Gastrocnemius medialis (tissue), 4 donors: ENCODE measurements at regions of chr17 and their contacts with region 1.

Region 1: DNA sequence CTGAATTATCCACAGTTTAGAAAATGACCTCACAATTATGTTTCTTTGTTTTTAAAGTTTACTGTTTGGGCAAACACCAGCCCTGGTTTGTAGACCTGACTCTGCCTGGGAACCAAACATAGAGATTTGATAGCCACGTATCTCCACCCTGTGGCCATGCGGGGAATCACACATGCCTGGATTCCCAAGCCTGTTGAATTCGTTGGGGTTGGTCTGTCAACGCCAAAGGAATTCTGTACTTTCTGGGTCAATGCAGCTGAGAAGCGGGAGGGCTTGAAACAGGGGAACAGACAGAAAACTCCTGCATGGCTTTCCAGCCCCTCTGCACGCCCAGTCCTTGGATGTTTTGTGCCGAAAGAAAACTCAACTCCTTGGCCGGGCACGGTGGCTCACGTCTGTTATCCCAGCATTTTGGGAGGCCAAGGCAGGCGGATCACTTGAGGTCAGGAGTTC is 27.0 kb downstream of the CD300A start:
- DNase-seq: peak; percentile 34 to 62
- ATAC-seq: peak; percentile 95 to 97
- H3K4me3 ChIP-seq: no peak overlapping the region
- H3K27ac ChIP-seq: no peak overlapping the region
- H3K4me1 ChIP-seq: peaks cover 4 to 12% of the 10 kb centered on the region in 2 donors
- H3K27me3 ChIP-seq: no peaks in the 10 kb centered on the region
- CTCF ChIP-seq: peak; percentile 84 to 92 (median 89)
- POLR2A ChIP-seq: no peak

Region 2: GRCh38 chr17:74203439-74204240 is 289.8 kb before region 1 on chr17 and contains the start of gene RPL38:
- in situ Hi-C with region 1: loop called in 1 of 4 experiments (anchors 25 kb)
- intact Hi-C with region 1: no loop called
- DNase-seq: peak; percentile 94 to 95
- ATAC-seq: peak; percentile 92 to 96
- H3K4me3 ChIP-seq: peak within 1 kb of the TSS; percentile 80 to 93 (median 87)
- H3K27ac ChIP-seq: peak within 1 kb of the TSS; percentile 87 to 89 (median 88)
- H3K4me1 ChIP-seq: peaks cover 28 to 40% of the 10 kb centered on the region in 2 donors
- H3K27me3 ChIP-seq: peaks cover 0 to 13% (median 0%) of the 10 kb centered on the region in 3 donors
- CTCF ChIP-seq: peak; percentile 93 to 98 (median 96)
- POLR2A ChIP-seq: peak; percentile 90 to 93
- total RNA-seq, gene RPL38: 346 to 472 (median 443) TPM

Region 3: GRCh38 chr17:74457146-74457819 is 36.1 kb before region 1 on chr17:
- in situ Hi-C with region 1: no loop called
- intact Hi-C with region 1: loop called (anchors 2 kb)
- DNase-seq: peak in 1 of 2 donors; percentile 78
- ATAC-seq: peak; percentile 24 to 28
- H3K4me3 ChIP-seq: peak overlapping the region in 2 of 4 donors; percentile 25 to 39
- H3K27ac ChIP-seq: peak overlapping the region; percentile 58 to 97 (median 69)
- H3K4me1 ChIP-seq: peaks cover 29 to 36% of the 10 kb centered on the region in 2 donors
- H3K27me3 ChIP-seq: no peaks in the 10 kb centered on the region
- CTCF ChIP-seq: peak; percentile 98 to 99 (median 98)
- POLR2A ChIP-seq: no peak

Region 4: DNA sequence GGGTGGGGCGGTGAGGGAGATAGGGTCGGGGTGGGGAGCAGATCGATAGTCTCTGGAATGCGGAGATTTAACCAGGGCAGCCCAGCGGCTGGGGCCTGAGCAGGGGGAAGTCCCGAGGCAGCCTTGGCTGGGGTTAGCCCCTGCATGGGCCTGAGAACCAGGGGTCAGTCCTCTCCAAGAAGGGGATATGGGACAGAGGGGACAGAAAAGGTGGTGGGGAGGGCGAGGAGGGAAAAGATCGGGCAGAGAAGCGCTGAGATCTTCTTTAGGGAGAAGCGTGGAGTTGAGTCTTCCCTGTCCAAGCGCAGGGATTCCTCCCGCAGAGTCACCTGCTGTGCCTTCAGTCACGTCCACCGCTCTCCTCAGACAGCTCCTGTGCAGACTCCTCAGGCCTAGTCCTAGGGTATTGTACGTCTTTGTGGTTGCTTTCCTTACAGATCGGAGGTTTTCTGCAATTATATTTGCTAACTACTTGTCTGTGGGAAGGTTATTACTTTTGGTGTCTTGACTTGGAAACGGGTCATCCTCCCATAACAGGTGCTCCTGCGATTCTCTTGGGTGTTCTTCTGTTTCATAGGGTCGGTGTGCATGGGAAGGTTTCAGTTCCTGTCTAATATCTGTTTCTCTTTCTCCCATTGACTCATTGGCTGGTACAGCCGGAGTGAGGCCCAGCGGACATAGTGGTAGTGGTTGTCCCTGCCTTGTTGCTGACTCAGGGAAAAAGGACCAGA is 26.0 kb before region 1 on chr17:
- in situ Hi-C with region 1: no loop called
- intact Hi-C with region 1: no loop called
- DNase-seq: no peak
- ATAC-seq: peak in 1 of 2 donors; percentile 32
- H3K4me3 ChIP-seq: peak overlapping the region in 1 of 4 donors; percentile 30
- H3K27ac ChIP-seq: no peak overlapping the region
- H3K4me1 ChIP-seq: no peaks in the 10 kb centered on the region
- H3K27me3 ChIP-seq: no peaks in the 10 kb centered on the region
- CTCF ChIP-seq: no peak
- POLR2A ChIP-seq: no peak

Region 5: DNA sequence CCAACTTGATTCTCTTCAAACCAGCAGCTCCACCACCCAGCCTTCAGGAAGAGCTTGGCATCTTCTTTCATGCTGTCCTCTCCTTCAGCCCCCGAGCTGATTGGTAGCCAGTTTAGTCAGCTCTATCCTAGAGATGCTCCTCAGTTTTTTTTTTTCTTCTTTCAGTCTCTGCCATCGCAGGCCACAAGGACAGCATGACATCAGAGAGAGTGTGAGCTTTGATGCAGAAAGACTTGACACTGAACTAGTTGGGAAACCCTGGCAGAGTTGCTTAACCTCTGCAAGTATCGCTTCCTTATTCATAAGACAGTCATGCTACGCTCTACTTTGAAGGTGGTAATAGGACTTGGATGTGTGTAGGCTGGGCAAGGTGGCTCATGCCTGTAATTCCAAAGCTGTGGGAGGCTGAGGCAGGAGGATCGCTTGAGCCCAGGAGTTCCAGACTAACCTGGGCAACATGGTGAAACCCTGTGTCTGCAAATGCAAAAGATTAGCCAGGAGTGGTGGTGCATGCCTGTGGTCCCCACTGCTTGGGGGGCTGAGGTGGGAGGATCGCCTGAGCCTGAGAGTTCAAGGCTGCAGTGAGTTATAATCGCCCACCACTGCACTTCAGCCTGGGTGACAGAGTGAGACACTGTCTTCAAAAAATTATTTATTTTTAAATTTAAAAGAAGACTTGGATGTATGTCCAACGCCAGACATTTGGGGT is 35.2 kb after region 1 on chr17:
- in situ Hi-C with region 1: no loop called
- intact Hi-C with region 1: loop called (anchors 5 kb)
- DNase-seq: peak in 1 of 2 donors; percentile 31
- ATAC-seq: peak; percentile 17 to 34
- H3K4me3 ChIP-seq: no peak overlapping the region
- H3K27ac ChIP-seq: no peak overlapping the region
- H3K4me1 ChIP-seq: no peaks in the 10 kb centered on the region
- H3K27me3 ChIP-seq: no peaks in the 10 kb centered on the region
- CTCF ChIP-seq: no peak
- POLR2A ChIP-seq: no peak